CD4-positive, alpha-beta memory T cell (primary cell): ENCODE measurements at regions of chr20 and their contacts with region 1.

Region 1: DNA sequence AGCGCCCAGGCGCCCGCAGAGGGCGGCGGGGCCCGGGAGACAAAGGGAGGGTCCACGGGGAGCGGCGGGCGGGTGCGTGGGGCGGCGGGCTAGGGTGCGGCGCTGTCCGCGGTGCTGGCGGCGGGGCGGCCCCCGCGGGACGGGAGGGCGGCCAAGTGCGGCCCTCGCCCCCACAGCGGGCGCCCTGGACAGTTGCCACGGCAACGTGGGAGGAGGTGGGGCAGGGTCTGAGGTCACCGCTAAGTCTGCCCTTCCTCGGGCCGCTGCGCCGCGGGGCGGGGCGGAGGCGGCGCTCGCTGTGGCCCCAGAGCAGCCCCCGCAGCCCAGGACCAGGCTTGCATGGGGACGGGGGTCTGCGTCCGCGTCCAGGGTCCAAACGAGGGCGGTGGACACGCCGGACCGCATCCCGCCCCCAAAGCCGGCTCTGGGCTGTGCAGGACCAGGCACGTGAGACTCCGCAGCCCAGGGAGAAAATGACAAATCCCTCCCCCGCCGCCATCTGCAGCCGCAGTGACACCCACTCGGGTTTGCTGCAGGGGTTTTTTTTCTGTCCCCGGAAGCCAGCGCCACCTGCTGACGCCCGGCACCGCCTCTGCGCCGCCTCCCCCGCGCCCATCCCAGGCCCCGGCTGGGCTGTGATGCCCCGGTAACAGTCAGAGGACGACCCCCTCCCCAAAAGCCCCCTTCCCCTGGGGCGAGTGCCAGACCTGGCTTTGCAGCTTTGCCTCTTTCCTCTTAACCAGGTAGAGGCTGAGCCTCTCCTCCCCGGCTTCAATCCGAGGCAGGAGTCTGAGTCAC is 36.8 kb downstream of the YTHDF1 start:
- DNase-seq: peak; percentile 63 to 76 (median 67)
- H3K4me3 ChIP-seq: peak overlapping the region in 1 of 2 donors; percentile 24
- H3K4me3 Mint-ChIP-seq: peak overlapping the region; percentile 35 to 76 (median 58)
- H3K27ac ChIP-seq: no peak overlapping the region
- H3K27ac Mint-ChIP-seq: peak overlapping the region in 1 of 7 donors; percentile 60
- H3K4me1 ChIP-seq: peaks cover 16% of the 10 kb centered on the region
- H3K4me1 Mint-ChIP-seq: peaks cover 4 to 15% (median 10%) of the 10 kb centered on the region in 4 donors
- H3K27me3 ChIP-seq: peaks cover 21% of the 10 kb centered on the region
- H3K27me3 Mint-ChIP-seq: peaks cover 26 to 27% of the 10 kb centered on the region in 2 donors

Region 2: DNA sequence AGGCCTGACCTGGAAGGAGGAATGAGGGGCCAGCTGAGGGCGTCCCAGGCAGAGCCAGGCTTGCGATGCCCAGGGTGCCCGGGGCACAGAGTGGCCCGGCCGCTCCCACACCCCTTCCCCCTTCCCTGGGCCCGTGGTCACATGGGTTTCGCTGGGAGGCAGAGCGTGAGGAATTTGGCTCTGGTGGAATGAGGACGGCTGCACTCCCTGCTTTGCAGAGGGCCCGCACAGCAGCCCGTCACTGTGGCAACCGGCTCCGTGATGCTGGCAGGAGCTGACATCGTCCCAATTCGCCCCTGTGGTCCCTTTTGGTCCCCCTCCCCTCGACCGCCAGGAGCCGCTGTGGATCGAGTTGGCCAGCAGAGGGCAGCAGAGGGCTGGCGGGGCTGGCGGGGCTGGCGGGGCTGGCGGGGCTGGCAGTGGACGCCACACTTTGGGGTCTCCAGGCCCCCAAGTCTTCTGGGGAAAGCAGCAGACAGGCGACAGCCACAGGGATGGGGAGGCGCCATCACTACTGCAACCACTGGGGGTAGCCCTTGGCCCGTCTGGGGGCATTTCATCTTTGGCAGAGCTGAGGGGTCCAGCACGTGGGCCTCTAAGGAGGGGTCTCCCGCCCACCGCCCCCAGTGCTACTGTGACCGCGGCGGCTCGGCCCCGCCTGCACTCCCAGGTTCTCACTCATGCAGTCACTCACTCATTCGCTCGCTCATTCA is 122.7 kb before region 1 on chr20:
- CTCF ChIA-PET with region 1: interaction called, 19 read pairs
- POLR2A ChIA-PET with region 1: no interaction called
- intact Hi-C with region 1: loop called (anchors 1 kb)
- DNase-seq: peak in 4 of 5 donors; percentile 30 to 47 (median 38)
- H3K4me3 ChIP-seq: no peak overlapping the region
- H3K4me3 Mint-ChIP-seq: no peak overlapping the region
- H3K27ac ChIP-seq: no peak overlapping the region
- H3K27ac Mint-ChIP-seq: no peak overlapping the region
- H3K4me1 ChIP-seq: no peaks in the 10 kb centered on the region
- H3K4me1 Mint-ChIP-seq: peaks cover 0 to 5% (median 0%) of the 10 kb centered on the region in 4 donors
- H3K27me3 ChIP-seq: no peaks in the 10 kb centered on the region
- H3K27me3 Mint-ChIP-seq: peaks cover 9 to 14% of the 10 kb centered on the region in 2 donors

Region 3: DNA sequence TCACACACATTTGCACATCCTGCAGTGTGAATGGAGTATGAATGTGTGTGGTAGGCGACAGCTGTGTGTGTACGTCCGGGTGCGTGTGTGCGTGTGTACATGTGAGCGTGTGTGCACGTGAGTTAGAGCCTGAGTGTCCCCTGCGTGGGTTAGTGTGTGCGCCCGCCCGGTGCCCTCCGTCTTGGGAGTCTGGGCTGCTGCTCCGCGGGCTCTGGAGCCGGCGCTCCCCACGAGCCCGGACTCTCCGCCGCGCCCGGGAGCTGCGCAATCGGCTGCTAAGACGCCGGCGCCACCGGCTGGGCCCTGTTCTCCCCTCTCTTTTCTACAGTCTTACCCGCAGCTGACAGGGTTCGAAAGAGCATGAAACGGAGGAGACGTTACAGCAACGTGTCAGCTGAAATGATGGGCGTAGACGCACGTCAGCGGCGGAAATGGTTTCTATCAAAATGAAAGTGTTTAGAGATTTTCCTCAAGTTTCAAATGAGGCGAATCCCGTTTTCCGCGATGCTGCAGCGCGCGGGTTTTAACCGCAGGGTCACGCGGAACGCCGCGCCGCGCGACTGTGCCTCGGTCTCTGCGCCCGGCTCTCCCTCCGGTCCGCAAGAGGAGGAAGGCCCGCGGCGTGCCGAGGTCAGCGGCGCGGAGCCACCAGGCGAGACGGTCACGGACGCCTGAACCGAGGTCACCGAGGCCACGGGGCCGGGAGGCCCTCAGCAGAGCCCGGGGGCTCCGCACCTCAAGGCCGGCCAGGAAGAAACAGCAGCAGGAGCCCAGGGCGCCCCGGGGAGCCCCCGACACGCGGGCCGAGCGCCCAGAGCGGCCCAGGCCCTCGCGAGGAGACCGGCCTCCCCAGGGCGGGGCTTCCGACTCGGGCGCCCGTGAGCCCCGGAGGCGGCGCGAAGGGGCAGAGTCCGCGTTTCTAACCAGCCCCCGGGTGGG is 77.0 kb before region 1 on chr20:
- CTCF ChIA-PET with region 1: no interaction called
- POLR2A ChIA-PET with region 1: interaction called, 3 read pairs
- intact Hi-C with region 1: loop called (anchors 5 kb)
- DNase-seq: peak; percentile 73 to 84 (median 82)
- H3K4me3 ChIP-seq: peak overlapping the region; percentile 42 to 86
- H3K4me3 Mint-ChIP-seq: peak overlapping the region; percentile 83 to 92 (median 90)
- H3K27ac ChIP-seq: peak overlapping the region; percentile 91
- H3K27ac Mint-ChIP-seq: peak overlapping the region; percentile 96 to 99 (median 97)
- H3K4me1 ChIP-seq: peaks cover 5% of the 10 kb centered on the region
- H3K4me1 Mint-ChIP-seq: peaks cover 0 to 12% (median 1%) of the 10 kb centered on the region in 4 donors
- H3K27me3 ChIP-seq: no peaks in the 10 kb centered on the region
- H3K27me3 Mint-ChIP-seq: peaks cover 0 to 3% of the 10 kb centered on the region in 2 donors